Esophagus squamous epithelium (tissue), 5 donors: ENCODE measurements at regions of chr11 and their contacts with region 1.

Region 1: DNA sequence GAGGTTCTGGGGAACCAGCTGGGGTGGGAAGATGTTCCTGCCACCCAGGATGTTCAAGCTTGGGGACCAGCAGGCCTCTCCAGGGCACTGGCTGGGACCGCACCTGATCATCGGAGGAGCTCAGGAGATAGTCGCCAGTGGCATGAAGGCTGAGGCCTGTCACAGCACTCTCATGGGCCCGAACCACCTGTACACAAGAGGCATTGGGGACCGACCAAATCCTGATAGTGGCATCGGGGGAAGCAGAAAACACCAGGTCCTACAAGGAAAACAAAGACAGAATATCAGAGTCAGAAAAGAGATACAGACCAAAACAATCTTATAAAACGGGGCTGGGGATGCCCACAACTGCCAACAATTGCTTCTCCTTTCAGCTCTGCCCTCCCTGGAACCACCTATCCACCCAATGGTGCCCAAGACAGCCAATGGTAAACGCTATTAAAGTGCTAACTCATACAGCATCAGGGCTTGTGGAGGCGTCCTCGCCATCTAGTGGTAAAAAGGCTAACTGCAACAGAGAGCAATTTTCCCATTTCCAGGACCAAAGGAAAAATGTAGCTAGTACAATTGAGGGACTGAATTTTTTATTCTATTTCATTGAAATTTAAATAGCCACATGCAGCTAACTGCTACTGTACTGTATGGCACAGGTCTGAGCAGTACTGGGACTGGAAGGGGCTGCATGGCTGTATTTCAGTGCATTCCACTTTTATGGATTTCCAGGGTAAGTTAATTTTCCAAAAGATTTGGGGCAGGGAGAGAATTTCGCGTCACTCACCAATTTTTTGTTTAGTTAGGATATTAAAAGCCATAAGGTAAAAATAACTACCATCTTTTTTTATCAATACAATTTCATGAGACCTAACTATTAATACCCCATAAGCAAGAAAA is 7.1 kb downstream of the PRPF19 start:
- DNase-seq: no peak
- H3K4me3 ChIP-seq: no peak overlapping the region
- H3K27ac ChIP-seq: peak overlapping the region in 2 of 4 donors; percentile 4 to 23
- H3K4me1 ChIP-seq: peaks cover 0 to 12% (median 5%) of the 10 kb centered on the region in 3 donors
- H3K27me3 ChIP-seq: no peaks in the 10 kb centered on the region
- CTCF ChIP-seq: peak; percentile 83 to 95 (median 88)
- POLR2A ChIP-seq: no peak

Region 2: GRCh38 chr11:60838132-60838531 is 61.2 kb before region 1 on chr11:
- intact Hi-C with region 1: loop called (anchors 5 kb)
- DNase-seq: no peak
- H3K4me3 ChIP-seq: no peak overlapping the region
- H3K27ac ChIP-seq: no peak overlapping the region
- H3K4me1 ChIP-seq: peaks cover 12 to 29% (median 18%) of the 10 kb centered on the region in 3 donors
- H3K27me3 ChIP-seq: no peaks in the 10 kb centered on the region
- CTCF ChIP-seq: no peak
- POLR2A ChIP-seq: no peak